ENCODE measurements at regions of chr1 and their contacts with region 1.

Region 1: GRCh38 chr1:36149237-36149972 is at the start of gene TRAPPC3:
- DNase-seq: peak; percentile 99
- H3K4me3 ChIP-seq: peak within 1 kb of the TSS; percentile 86
- CTCF ChIP-seq: peak; percentile 94

Region 2: GRCh38 chr1:36008546-36009197 is 140.7 kb before region 1 on chr1:
- CTCF ChIA-PET with region 1: no interaction called
- POLR2A ChIA-PET with region 1: no interaction called
- DNase-seq: no peak
- H3K4me3 ChIP-seq: no peak overlapping the region
- CTCF ChIP-seq: no peak

Region 3: DNA sequence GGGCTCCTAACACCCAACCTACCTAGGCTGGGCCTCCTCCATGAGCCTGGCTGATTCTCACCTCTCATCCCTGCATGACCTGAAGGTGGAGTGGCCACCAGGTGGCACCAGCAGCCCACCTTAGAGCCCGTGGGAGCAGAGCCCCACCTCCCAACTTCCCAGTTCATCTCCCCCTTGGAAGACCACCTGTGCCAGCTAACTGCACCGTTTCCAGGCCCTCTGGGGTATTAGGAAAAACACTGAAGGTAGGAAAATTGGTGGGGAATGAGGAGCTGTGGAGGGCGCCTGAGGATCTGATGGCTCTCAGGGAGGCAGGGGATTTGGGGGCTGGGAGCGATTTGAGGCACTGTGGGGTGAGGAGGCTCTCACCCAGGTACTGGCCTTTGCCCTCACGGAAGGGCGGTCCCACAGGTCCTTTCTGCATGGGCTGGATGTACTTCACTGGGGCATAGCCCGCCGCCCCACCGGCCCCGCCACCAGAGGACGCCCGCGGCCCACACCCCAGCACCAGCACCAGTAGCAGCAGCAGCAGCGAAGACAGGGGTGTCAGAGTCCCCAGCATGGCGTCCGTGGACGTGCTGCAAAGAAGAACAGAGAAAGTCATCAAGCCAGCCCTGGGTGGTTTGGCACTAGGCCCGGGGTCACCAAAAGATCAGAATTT is 49.6 kb before region 1 on chr1:
- CTCF ChIA-PET with region 1: interaction called, 33 read pairs
- POLR2A ChIA-PET with region 1: interaction called, 3 read pairs
- DNase-seq: no peak
- H3K4me3 ChIP-seq: no peak overlapping the region
- CTCF ChIP-seq: peak; percentile 91

Region 4: GRCh38 chr1:36134505-36135329 is 14.7 kb before region 1 on chr1:
- CTCF ChIA-PET with region 1: interaction called, 40 read pairs
- POLR2A ChIA-PET with region 1: interaction called, 10 read pairs
- DNase-seq: no peak
- H3K4me3 ChIP-seq: no peak overlapping the region
- CTCF ChIP-seq: peak; percentile 77

Region 5: DNA sequence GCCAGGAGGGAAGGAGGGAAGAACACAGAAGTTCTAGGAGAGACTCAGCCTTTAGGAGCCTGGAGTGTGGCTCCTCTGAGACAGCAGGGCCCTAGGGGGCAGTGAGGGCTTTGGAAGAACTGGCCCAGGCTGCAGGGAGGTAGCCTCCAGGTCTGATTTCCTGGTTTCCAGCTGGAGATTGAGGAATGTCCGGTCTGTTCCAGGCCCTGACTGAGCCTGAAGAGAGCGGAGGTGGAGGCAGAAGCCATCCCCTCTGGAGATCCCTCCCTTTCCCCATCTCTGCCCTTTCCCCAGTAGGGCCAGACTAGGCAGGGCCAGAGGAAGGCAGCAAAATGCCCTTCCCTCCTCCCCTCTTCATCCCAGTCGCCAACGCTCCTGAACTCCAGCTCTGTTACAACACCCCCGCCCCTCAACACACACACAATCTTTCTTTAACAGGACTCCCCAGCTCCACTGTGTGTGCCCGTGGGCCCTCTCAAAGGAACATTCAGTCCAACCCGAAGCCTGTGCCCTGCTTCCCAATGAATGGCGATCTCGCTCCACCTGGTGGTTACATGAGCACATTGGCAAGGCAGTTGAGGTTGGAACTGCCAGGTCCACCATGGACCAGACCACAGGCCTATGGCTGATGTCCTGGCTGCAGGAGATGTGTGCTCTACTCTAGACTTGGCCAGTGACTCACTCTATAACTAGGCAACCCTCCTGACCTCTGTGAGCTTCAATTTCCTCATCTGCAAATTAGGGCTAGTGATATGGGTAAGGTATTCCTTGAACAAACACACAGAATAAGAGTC is 38.6 kb after region 1 on chr1:
- CTCF ChIA-PET with region 1: interaction called, 164 read pairs
- POLR2A ChIA-PET with region 1: interaction called, 21 read pairs
- DNase-seq: peak; percentile 62
- H3K4me3 ChIP-seq: no peak overlapping the region
- CTCF ChIP-seq: peak; percentile 97

Region 6: GRCh38 chr1:36223993-36224536 is 74.7 kb after region 1 on chr1 and contains the start of gene THRAP3:
- CTCF ChIA-PET with region 1: interaction called, 22 read pairs
- POLR2A ChIA-PET with region 1: interaction called, 21 read pairs
- DNase-seq: peak; percentile 95
- H3K4me3 ChIP-seq: peak within 1 kb of the TSS; percentile 85
- CTCF ChIP-seq: no peak

Region 7: GRCh38 chr1:36285448-36286101 is 136.2 kb after region 1 on chr1:
- CTCF ChIA-PET with region 1: interaction called, 81 read pairs
- POLR2A ChIA-PET with region 1: interaction called, 9 read pairs
- DNase-seq: peak; percentile 69
- H3K4me3 ChIP-seq: no peak overlapping the region
- CTCF ChIP-seq: peak; percentile 54

Region 8: DNA sequence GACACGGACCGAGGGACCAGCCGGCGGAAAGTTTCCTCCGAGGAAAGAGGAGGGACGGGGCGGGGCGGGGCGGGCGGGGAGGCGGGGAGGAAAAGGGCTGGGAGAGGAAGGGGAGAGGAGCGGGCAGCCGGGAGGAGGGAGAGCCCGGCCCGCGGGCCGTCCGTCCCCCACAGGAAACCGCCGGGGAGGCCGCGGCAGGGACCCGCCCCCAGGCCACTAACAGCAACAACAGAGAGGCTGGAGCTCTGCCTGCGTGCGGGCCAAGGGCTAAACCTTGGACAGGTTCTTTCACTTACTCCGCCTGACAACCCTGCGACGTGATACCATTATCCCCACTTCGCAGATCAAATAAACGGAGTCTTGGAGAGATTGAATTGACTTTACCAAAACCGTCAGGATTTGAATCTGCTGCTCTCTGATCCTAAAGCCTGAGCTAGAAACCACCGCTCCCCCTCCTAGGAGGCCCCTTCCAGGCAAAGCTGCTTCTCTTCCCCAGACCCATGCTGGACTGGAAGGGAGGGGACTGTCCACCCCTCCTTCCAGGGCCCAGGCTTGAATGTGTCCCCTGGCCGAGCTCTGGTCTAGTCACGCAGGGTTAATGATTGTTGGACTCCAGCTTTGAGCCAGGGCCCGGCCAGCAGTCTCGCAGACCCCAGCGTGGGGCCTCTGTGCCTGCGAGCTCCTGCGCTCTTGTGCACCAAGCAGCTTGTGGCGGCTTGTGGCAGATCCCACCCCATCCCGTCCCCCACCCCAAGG is 174.4 kb after region 1 on chr1 and contains the start of gene EVA1B:
- CTCF ChIA-PET with region 1: interaction called, 4 read pairs
- POLR2A ChIA-PET with region 1: interaction called, 11 read pairs
- DNase-seq: no peak
- H3K4me3 ChIP-seq: peak within 1 kb of the TSS; percentile 78
- CTCF ChIP-seq: no peak

Measured in AG04449 (cell line).